ENCODE measurements at regions of chr6 and their contacts with region 1.

Region 1: GRCh38 chr6:56637640-56638039 is 5.0 kb downstream of the DST start:
- DNase-seq: no peak
- ATAC-seq: no peak
- H3K4me3 Mint-ChIP-seq: no peak overlapping the region
- H3K27ac Mint-ChIP-seq: no peak overlapping the region
- H3K4me1 Mint-ChIP-seq: no peaks in the 10 kb centered on the region
- H3K27me3 Mint-ChIP-seq: no peaks in the 10 kb centered on the region
- CTCF ChIP-seq: no peak

Region 2: GRCh38 chr6:56624046-56624727 is 13.5 kb before region 1 on chr6:
- CTCF ChIA-PET with region 1: no interaction called
- POLR2A ChIA-PET with region 1: no interaction called
- intact Hi-C with region 1: no loop called
- DNase-seq: no peak
- ATAC-seq: no peak
- H3K4me3 Mint-ChIP-seq: no peak overlapping the region
- H3K27ac Mint-ChIP-seq: no peak overlapping the region
- H3K4me1 Mint-ChIP-seq: no peaks in the 10 kb centered on the region
- H3K27me3 Mint-ChIP-seq: no peaks in the 10 kb centered on the region
- CTCF ChIP-seq: no peak

Region 3: DNA sequence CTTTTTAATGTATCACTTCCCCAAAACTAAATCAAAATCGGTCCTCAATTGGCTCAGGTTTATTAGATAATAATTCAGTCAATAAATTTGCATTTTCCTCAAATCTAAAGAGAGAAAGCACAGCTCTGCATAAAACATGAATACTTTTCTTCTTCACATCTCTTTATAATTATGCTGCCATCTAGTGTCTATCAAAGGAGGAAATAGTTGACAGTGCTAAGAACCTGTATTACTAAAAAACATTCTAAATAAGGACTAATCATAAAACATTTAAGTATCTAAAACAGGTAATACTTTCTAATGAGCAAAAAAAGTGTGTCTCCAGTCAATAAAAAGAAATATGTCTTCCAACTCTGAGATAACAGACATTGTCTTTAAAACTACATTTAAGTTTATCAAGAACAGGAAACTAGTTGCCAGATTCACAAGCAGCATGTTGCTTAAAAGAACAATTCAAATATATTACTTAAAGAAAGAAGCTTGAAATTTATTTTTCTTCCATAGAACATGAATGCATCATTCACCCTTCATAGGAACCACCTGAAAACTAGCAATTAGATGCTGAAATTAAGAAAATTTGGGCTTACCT is 61.5 kb after region 1 on chr6:
- CTCF ChIA-PET with region 1: no interaction called
- POLR2A ChIA-PET with region 1: no interaction called
- intact Hi-C with region 1: loop called (anchors 5 kb)
- DNase-seq: no peak
- ATAC-seq: no peak
- H3K4me3 Mint-ChIP-seq: no peak overlapping the region
- H3K27ac Mint-ChIP-seq: no peak overlapping the region
- H3K4me1 Mint-ChIP-seq: no peaks in the 10 kb centered on the region
- H3K27me3 Mint-ChIP-seq: no peaks in the 10 kb centered on the region
- CTCF ChIP-seq: no peak

Region 4: DNA sequence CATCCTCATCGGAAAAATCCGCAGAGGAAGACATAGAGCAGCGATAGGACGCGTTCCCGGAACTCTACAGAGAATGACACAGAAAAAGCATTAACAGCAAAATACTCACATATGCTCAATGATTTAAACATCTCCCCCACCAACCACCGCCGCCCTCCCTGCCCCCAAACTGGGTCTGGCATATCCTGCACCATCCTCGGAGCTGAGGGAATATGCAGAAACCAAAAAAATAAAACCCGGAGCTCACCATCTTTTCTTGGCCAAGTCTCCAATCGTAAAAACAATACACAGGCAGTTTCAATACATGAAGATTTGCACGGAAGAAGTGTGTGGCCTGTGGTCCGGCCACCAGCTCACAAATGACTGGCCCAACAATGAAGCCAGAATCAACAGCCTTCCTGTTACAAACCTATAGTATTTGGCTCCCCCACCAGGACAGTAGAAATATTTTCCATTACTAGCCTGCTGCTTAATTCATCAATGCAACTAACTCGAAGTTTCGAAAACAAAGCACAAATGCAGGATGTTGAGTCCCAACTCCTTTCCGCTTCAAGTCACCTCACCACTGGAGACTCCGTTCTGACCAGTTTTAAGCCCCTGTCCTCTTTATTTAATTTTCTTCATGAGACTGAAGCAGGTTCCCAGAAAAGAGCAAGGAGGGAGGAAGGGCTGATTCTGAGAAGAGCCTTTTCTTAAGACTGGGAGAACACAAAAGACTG is 214.1 kb after region 1 on chr6:
- CTCF ChIA-PET with region 1: interaction called, 8 read pairs
- POLR2A ChIA-PET with region 1: no interaction called
- intact Hi-C with region 1: loop called (anchors 2 kb)
- DNase-seq: no peak
- ATAC-seq: peak; percentile 54
- H3K4me3 Mint-ChIP-seq: peak overlapping the region; percentile 64
- H3K27ac Mint-ChIP-seq: no peak overlapping the region
- H3K4me1 Mint-ChIP-seq: peaks cover 16% of the 10 kb centered on the region
- H3K27me3 Mint-ChIP-seq: peaks cover 41% of the 10 kb centered on the region
- CTCF ChIP-seq: no peak

Region 5: DNA sequence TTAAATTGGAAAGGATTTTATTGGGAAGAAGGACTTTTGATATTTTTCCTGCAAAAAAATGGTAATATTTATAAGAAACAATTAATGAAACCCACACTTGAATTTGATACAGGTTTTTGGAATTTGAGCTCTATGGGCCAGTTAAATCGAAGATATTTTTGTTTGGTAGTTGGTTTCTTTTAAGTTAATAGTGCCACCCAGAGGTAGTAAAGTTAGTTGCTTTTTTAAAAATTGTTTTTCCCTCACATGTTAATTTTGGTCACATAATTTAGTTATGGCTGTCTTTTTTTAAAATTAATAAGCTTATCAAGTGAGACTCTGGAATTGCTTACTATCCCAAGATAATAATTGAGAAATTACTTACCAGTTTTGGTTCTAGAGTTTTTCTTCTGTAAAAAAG is 686.9 kb after region 1 on chr6:
- CTCF ChIA-PET with region 1: no interaction called
- POLR2A ChIA-PET with region 1: no interaction called
- intact Hi-C with region 1: loop called (anchors 2 kb)
- DNase-seq: no peak
- ATAC-seq: no peak
- H3K4me3 Mint-ChIP-seq: no peak overlapping the region
- H3K27ac Mint-ChIP-seq: no peak overlapping the region
- H3K4me1 Mint-ChIP-seq: peaks cover under 1% of the 10 kb centered on the region
- H3K27me3 Mint-ChIP-seq: no peaks in the 10 kb centered on the region
- CTCF ChIP-seq: no peak

Measured in activated B cell treated with CpG ODN at 0.5 μM for 24 hours (primary cell).